ENCODE measurements at regions of chr12 and their contacts with region 1.

Region 1: DNA sequence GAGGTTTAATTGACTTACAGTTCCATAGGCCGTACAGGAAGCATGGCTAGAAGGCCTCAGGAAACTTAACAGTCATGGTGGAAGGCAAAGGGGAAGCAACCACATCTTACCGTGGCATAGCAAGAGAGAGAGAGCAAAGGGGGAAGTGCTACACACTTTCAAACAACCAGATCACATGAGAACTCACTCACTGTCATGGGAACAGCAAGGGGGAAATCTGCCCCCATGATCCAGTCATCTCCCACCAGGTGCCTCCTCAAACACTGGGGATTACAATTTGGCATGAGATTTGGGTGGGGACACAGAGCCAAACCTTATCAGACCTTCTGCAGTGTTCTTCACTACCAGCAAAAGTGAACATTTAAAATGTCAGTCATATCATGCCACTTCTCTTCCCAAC is 58.9 kb downstream of the USP15 start:
- DNase-seq: no peak
- ATAC-seq: no peak
- H3K4me3 Mint-ChIP-seq: no peak overlapping the region
- H3K27ac Mint-ChIP-seq: no peak overlapping the region
- H3K4me1 Mint-ChIP-seq: peaks cover 22% of the 10 kb centered on the region
- H3K27me3 Mint-ChIP-seq: no peaks in the 10 kb centered on the region

Region 2: GRCh38 chr12:62301080-62301798 is 17.8 kb before region 1 on chr12:
- CTCF ChIA-PET with region 1: no interaction called
- POLR2A ChIA-PET with region 1: no interaction called
- intact Hi-C with region 1: loop called in 1 of 2 experiments (anchors 2 kb)
- DNase-seq: no peak
- ATAC-seq: peak; percentile 66
- H3K4me3 Mint-ChIP-seq: no peak overlapping the region
- H3K27ac Mint-ChIP-seq: peak overlapping the region; percentile 19
- H3K4me1 Mint-ChIP-seq: peaks cover 55% of the 10 kb centered on the region
- H3K27me3 Mint-ChIP-seq: no peaks in the 10 kb centered on the region

Region 3: GRCh38 chr12:62361048-62361447 is 42.0 kb after region 1 on chr12:
- CTCF ChIA-PET with region 1: no interaction called
- POLR2A ChIA-PET with region 1: no interaction called
- intact Hi-C with region 1: no loop called
- DNase-seq: no peak
- ATAC-seq: no peak
- H3K4me3 Mint-ChIP-seq: no peak overlapping the region
- H3K27ac Mint-ChIP-seq: no peak overlapping the region
- H3K4me1 Mint-ChIP-seq: peaks cover 7% of the 10 kb centered on the region
- H3K27me3 Mint-ChIP-seq: no peaks in the 10 kb centered on the region

Measured in activated CD4-positive, alpha-beta T cell treated with anti-CD3 and anti-CD28 coated beads for 36 hours (primary cell).